Endothelial cell of umbilical vein (primary cell): ENCODE measurements at regions of chr4 and their contacts with region 1.

Region 1: GRCh38 chr4:30714408-30715027 is 5.7 kb upstream of the PCDH7 start:
- DNase-seq: peak; percentile 65
- H3K4me3 ChIP-seq: no peak overlapping the region
- H3K27ac ChIP-seq: no peak overlapping the region
- H3K4me1 ChIP-seq: peaks cover 13% of the 10 kb centered on the region
- H3K27me3 ChIP-seq: no peaks in the 10 kb centered on the region
- CTCF ChIP-seq: peak; percentile 79
- POLR2A ChIP-seq: no peak

Region 2: GRCh38 chr4:30726090-30726675 is 11.7 kb after region 1 on chr4:
- CTCF ChIA-PET with region 1: interaction called, 13 read pairs
- POLR2A ChIA-PET with region 1: no interaction called
- dilution Hi-C with region 1: no loop called
- intact Hi-C with region 1: no loop called
- DNase-seq: peak; percentile 80
- H3K4me3 ChIP-seq: peak overlapping the region; percentile 4 to 63 (median 29)
- H3K27ac ChIP-seq: peak overlapping the region; percentile 48
- H3K4me1 ChIP-seq: peaks cover 66% of the 10 kb centered on the region
- H3K27me3 ChIP-seq: no peaks in the 10 kb centered on the region
- CTCF ChIP-seq: no peak
- POLR2A ChIP-seq: no peak

Region 3: GRCh38 chr4:30948653-30949052 is 234.1 kb after region 1 on chr4:
- CTCF ChIA-PET with region 1: interaction called, 3 read pairs
- POLR2A ChIA-PET with region 1: no interaction called
- dilution Hi-C with region 1: no loop called
- intact Hi-C with region 1: loop called (anchors 5 kb)
- DNase-seq: peak; percentile 29
- H3K4me3 ChIP-seq: no peak overlapping the region
- H3K27ac ChIP-seq: no peak overlapping the region
- H3K4me1 ChIP-seq: peaks cover 18% of the 10 kb centered on the region
- H3K27me3 ChIP-seq: no peaks in the 10 kb centered on the region
- CTCF ChIP-seq: no peak
- POLR2A ChIP-seq: no peak

Region 4: DNA sequence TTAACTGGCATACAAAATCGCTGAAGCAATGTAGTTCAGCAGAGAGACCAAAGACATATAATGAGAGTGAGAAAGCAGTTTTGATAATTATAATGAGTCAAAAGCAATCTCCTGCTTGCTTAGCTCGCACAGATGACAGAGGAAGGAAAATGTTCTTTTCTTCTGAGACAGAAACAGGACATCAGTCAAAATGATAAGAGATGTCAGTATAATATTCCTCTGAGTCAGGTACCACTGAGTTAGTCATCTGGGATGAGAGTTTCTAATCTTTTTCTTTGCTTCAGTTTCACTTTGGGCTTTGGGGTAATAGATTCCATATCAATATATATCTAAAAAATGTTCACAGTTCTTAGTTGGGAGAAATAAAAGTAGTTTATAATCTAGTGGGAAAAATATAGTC is 392.8 kb after region 1 on chr4:
- CTCF ChIA-PET with region 1: no interaction called
- POLR2A ChIA-PET with region 1: no interaction called
- dilution Hi-C with region 1: no loop called
- intact Hi-C with region 1: loop called (anchors 5 kb)
- DNase-seq: peak; percentile 26
- H3K4me3 ChIP-seq: no peak overlapping the region
- H3K27ac ChIP-seq: no peak overlapping the region
- H3K4me1 ChIP-seq: peaks cover 22% of the 10 kb centered on the region
- H3K27me3 ChIP-seq: no peaks in the 10 kb centered on the region
- CTCF ChIP-seq: no peak
- POLR2A ChIP-seq: no peak

Region 5: GRCh38 chr4:31674313-31674947 is 959.9 kb after region 1 on chr4:
- CTCF ChIA-PET with region 1: interaction called, 24 read pairs
- POLR2A ChIA-PET with region 1: no interaction called
- dilution Hi-C with region 1: no loop called
- intact Hi-C with region 1: loop called (anchors 1 kb)
- DNase-seq: peak; percentile 44
- H3K4me3 ChIP-seq: no peak overlapping the region
- H3K27ac ChIP-seq: no peak overlapping the region
- H3K4me1 ChIP-seq: no peaks in the 10 kb centered on the region
- H3K27me3 ChIP-seq: no peaks in the 10 kb centered on the region
- CTCF ChIP-seq: peak; percentile 44 to 52
- POLR2A ChIP-seq: no peak